Posterior vena cava (tissue), 2 donors: ENCODE measurements at regions of chr16 and their contacts with region 1.

Region 1: DNA sequence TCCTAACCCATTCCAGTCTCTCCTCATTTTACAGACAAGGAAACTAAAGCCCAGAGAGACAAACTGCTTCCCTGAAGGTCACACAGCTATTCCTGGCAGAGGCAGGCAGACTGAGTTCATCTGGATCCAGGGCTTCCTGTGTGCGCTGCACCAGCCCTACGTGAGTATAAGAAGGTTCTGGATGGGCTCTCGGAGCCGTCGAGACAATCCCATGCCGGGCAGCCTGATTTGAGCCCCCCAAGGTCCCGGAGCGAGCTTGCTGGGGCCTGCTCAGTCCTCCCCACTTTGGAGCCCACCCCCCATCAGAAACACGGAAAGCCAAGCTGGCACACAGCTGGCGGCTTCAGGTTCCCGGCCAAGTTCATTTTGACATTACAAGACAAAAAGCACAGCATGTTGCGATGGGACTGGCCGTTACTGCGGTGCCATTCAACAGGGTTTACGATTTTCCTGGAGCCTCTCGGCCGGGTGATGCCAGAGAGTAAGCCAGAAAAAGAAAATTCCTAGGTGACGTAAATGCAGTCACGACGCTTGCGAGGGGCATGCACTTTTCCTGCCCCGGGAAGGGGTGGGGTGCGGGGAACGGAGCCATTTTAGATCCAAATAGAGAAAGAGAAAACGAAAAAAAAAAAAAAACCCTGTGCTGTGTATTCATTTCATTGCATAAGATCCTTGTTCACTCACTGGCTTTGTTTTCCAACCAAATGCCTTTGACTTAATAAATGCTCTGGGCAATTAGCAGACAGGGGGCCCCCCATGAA is 167.1 kb upstream of the FOXF1 start:
- DNase-seq: peak; percentile 92

Region 2: GRCh38 chr16:86072328-86073102 is 270.7 kb before region 1 on chr16:
- intact Hi-C with region 1: loop called (anchors 5 to 10 kb)
- DNase-seq: peak; percentile 88

Region 3: GRCh38 chr16:86424398-86425367 is 81.5 kb after region 1 on chr16:
- intact Hi-C with region 1: loop called in 1 of 2 experiments (anchors 5 kb)
- DNase-seq: no peak